ENCODE measurements at regions of chr5 and their contacts with region 1.

Region 1: GRCh38 chr5:132227485-132228240 is at the start of gene P4HA2:
- DNase-seq: peak; percentile 89 to 91
- H3K4me3 ChIP-seq: peak within 1 kb of the TSS; percentile 59
- H3K4me3 Mint-ChIP-seq: peak within 1 kb of the TSS; percentile 77
- H3K27ac Mint-ChIP-seq: peak within 1 kb of the TSS; percentile 44
- H3K4me1 ChIP-seq: peaks cover 5% of the 10 kb centered on the region; the same call in 1 of the 2 replicates
- H3K4me1 Mint-ChIP-seq: peaks cover 5% of the 10 kb centered on the region
- H3K27me3 ChIP-seq: no peaks in the 10 kb centered on the region
- H3K27me3 Mint-ChIP-seq: no peaks in the 10 kb centered on the region
- CTCF ChIP-seq: peak in 1 of 2 experiments; percentile 10
- total RNA-seq, gene P4HA2: 41.0 and 42.3 TPM in 2 replicates

Region 2: GRCh38 chr5:131068893-131069643 is 1158.6 kb before region 1 on chr5:
- CTCF ChIA-PET with region 1: no interaction called
- POLR2A ChIA-PET with region 1: no interaction called
- intact Hi-C with region 1: no loop called
- DNase-seq: no peak
- H3K4me3 ChIP-seq: no peak overlapping the region
- H3K4me3 Mint-ChIP-seq: no peak overlapping the region
- H3K27ac Mint-ChIP-seq: no peak overlapping the region
- H3K4me1 ChIP-seq: peaks cover 4% of the 10 kb centered on the region; the same call in 1 of the 2 replicates
- H3K4me1 Mint-ChIP-seq: no peaks in the 10 kb centered on the region
- H3K27me3 ChIP-seq: no peaks in the 10 kb centered on the region
- H3K27me3 Mint-ChIP-seq: no peaks in the 10 kb centered on the region
- CTCF ChIP-seq: no peak

Region 3: GRCh38 chr5:132180134-132180745 is 47.4 kb before region 1 on chr5:
- CTCF ChIA-PET with region 1: no interaction called
- POLR2A ChIA-PET with region 1: no interaction called
- intact Hi-C with region 1: loop called (anchors 1 kb)
- DNase-seq: peak in 1 of 2 experiments; percentile 49
- H3K4me3 ChIP-seq: no peak overlapping the region
- H3K4me3 Mint-ChIP-seq: no peak overlapping the region
- H3K27ac Mint-ChIP-seq: no peak overlapping the region
- H3K4me1 ChIP-seq: peaks cover 3% of the 10 kb centered on the region; the same call in 1 of the 2 replicates
- H3K4me1 Mint-ChIP-seq: peaks cover 13% of the 10 kb centered on the region
- H3K27me3 ChIP-seq: no peaks in the 10 kb centered on the region
- H3K27me3 Mint-ChIP-seq: no peaks in the 10 kb centered on the region
- CTCF ChIP-seq: peak; percentile 71 to 76

Region 4: DNA sequence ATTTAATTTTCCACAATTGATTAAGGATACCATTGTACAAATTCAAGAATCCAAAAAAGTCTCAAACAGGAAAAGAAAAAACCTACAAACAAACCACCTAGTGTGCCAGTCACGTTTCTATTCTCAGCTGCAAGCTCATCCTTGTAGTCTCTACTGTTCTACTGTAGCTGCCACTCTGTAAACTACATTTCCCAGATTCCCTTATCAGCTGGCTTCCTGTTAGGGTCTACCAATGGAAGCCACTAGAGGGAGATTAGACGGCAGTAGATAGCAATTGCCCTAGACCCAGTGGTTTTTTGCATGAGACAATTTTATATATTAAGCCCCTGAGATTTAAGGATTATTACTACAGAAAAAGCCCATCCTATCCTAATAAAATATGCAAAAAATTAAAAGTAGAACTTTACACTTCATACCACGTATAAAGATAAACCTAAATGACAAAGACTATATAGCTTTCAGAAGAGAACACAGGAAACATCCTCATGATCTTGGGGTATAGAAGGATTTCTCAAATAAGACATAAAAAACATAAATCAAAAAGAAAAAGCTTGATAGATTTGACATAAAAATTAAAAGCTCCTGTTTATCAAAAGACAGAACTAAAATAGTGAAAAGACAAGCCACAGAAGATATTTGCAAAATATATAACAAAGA is 37.4 kb before region 1 on chr5:
- CTCF ChIA-PET with region 1: interaction called, 8 read pairs
- POLR2A ChIA-PET with region 1: no interaction called
- intact Hi-C with region 1: loop called (anchors 1 kb)
- DNase-seq: peak in 1 of 2 experiments; percentile 70
- H3K4me3 ChIP-seq: no peak overlapping the region
- H3K4me3 Mint-ChIP-seq: no peak overlapping the region
- H3K27ac Mint-ChIP-seq: no peak overlapping the region
- H3K4me1 ChIP-seq: no peaks in the 10 kb centered on the region
- H3K4me1 Mint-ChIP-seq: no peaks in the 10 kb centered on the region
- H3K27me3 ChIP-seq: no peaks in the 10 kb centered on the region
- H3K27me3 Mint-ChIP-seq: no peaks in the 10 kb centered on the region
- CTCF ChIP-seq: peak; percentile 73 to 92

Region 5: DNA sequence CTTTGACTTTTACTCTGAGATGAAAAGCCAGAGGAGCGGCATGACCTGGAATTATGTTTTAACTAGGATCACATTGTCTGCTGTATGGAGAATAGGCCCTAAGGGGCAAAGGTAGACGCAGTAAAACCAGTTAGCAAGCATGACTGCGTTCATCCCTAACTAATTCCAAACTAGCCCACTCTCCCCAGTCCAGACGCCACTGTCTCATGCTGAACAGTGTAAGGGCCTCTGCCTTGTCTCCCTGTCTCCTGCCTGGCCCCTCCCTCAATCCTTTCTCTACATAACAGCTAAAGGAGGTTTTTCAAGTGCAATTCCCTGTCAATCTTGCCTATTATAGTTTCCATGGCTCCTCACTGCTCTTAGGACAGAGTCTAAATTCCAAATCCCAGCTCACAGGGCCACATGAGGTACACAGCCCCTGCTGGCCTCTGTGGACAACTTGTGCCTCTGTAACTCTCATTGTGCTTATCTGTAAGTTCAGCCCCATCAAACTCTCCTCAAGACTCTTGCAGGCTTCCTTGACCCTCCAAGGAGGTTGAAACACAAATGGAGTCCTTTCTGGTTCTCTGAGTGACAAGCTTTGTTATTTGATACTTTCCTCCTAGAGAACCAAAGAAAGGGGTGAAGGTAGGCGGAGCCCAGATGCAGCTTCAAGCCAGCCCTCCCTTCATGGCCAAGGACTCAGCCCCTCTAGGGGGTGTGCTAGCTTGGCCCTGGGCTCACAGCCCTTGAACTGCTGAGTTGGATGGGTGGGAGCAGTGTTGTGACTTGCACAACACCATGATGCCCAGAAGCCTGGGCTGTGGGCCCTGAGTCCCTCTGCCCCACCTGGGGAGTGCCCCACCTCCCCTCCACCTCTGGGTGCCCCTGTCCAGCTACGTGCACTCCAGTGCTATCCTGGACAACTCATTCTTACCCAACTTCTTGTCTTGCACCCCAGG is 50.6 kb after region 1 on chr5:
- CTCF ChIA-PET with region 1: no interaction called
- POLR2A ChIA-PET with region 1: no interaction called
- intact Hi-C with region 1: loop called (anchors 2 kb)
- DNase-seq: peak; percentile 82 to 91
- H3K4me3 ChIP-seq: no peak overlapping the region
- H3K4me3 Mint-ChIP-seq: peak overlapping the region; percentile 13
- H3K27ac Mint-ChIP-seq: peak overlapping the region; percentile 45
- H3K4me1 ChIP-seq: peaks cover 46% of the 10 kb centered on the region
- H3K4me1 Mint-ChIP-seq: peaks cover 50% of the 10 kb centered on the region
- H3K27me3 ChIP-seq: no peaks in the 10 kb centered on the region
- H3K27me3 Mint-ChIP-seq: no peaks in the 10 kb centered on the region
- CTCF ChIP-seq: peak; percentile 13 to 37

Region 6: DNA sequence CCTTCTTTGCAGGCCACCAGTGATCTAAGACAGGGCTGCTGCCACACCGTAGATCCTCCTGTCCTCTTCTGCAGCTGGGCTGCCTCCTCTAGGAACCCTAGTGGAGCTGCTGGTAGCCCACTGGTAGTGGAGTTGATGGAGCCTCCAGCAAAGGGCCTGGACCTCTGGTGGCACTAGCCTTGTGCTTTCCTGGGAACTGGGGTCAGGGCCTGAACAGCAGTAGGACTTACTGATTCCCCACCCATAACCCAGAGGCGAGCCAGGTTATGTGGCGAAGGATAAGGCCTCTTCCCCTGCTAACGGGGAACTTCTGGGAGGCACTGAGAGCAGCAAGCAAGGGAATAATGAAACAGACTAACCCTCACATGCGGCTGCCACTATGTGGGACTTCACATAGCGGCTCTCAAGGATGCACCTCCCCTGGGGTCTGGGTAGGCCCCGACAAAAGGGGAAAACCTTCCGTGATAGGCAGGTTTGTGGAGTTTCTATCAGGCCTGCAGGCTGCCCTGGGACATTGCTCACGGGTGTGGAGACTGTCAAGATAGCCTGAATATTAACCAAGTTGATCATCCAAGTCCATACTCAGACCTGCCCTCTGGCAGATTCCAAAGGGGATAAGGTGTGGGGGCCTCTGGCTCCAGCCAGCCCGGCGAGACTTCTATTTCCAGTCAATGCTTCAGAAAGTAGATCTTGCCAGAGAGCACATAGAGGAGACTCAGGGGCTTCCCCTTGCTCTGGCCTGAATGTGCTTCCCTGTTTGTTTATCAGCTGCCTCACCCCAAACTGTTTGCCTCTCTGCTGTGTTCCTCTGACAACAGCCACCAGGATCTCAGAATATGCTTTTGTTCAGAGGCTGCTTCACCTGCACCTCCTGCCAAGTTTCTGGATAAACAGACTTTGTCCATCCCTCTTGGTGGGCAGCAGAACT is 73.9 kb after region 1 on chr5:
- CTCF ChIA-PET with region 1: no interaction called
- POLR2A ChIA-PET with region 1: no interaction called
- intact Hi-C with region 1: no loop called
- DNase-seq: no peak
- H3K4me3 ChIP-seq: no peak overlapping the region
- H3K4me3 Mint-ChIP-seq: no peak overlapping the region
- H3K27ac Mint-ChIP-seq: no peak overlapping the region
- H3K4me1 ChIP-seq: peaks cover 18% of the 10 kb centered on the region
- H3K4me1 Mint-ChIP-seq: peaks cover 12% of the 10 kb centered on the region
- H3K27me3 ChIP-seq: no peaks in the 10 kb centered on the region
- H3K27me3 Mint-ChIP-seq: no peaks in the 10 kb centered on the region
- CTCF ChIP-seq: no peak

Region 7: GRCh38 chr5:132369474-132370180 is 142.0 kb after region 1 on chr5 and contains the start of gene SLC22A5:
- CTCF ChIA-PET with region 1: no interaction called
- POLR2A ChIA-PET with region 1: interaction called, 12 read pairs
- intact Hi-C with region 1: loop called (anchors 5 kb)
- DNase-seq: peak; percentile 86 to 90
- H3K4me3 ChIP-seq: peak within 1 kb of the TSS; percentile 79
- H3K4me3 Mint-ChIP-seq: peak within 1 kb of the TSS; percentile 79
- H3K27ac Mint-ChIP-seq: peak within 1 kb of the TSS; percentile 85
- H3K4me1 ChIP-seq: peaks cover 44% of the 10 kb centered on the region
- H3K4me1 Mint-ChIP-seq: peaks cover 21% of the 10 kb centered on the region
- H3K27me3 ChIP-seq: no peaks in the 10 kb centered on the region
- H3K27me3 Mint-ChIP-seq: no peaks in the 10 kb centered on the region
- CTCF ChIP-seq: no peak
- total RNA-seq, gene SLC22A5: 19.1 and 20.2 TPM in 2 replicates